Activated CD8-positive, alpha-beta memory T cell treated with anti-CD3 and anti-CD28 coated beads, Interleukin-2, amount 10 ng/mL, durations not matched to agents 7 days and 5 days (primary cell): ENCODE measurements at regions of chr1 and their contacts with region 1.

Region 1: GRCh38 chr1:2194898-2195673 is 514 bp upstream of the FAAP20 start:
- DNase-seq: peak; percentile 93
- ATAC-seq: peak; percentile 80
- H3K4me3 Mint-ChIP-seq: peak overlapping the region; percentile 73
- H3K27ac Mint-ChIP-seq: peak overlapping the region; percentile 89
- H3K4me1 Mint-ChIP-seq: peaks cover 35% of the 10 kb centered on the region
- H3K27me3 Mint-ChIP-seq: no peaks in the 10 kb centered on the region

Region 2: DNA sequence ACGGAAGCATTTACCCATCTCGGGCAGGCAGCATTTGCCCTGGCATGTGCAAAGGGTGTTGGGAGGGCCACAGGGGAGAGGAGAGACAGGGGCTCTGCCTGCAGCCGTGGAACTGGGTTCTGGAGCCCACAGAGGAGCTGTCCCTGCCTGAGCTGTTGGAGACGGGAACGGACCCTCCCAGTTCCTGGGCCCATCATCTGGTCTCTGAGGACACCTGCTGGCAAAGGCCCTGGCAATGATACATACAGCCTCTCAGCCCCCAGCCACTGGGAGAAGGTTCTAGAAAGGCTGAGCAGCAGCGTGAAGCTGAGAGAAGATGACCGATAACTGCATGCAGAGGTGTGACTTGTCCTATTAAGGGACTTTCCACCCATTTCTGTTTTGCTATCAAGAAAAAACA is 31.9 kb before region 1 on chr1:
- CTCF ChIA-PET with region 1: no interaction called
- DNase-seq: no peak
- ATAC-seq: no peak
- H3K4me3 Mint-ChIP-seq: no peak overlapping the region
- H3K27ac Mint-ChIP-seq: no peak overlapping the region
- H3K4me1 Mint-ChIP-seq: peaks cover 5% of the 10 kb centered on the region
- H3K27me3 Mint-ChIP-seq: no peaks in the 10 kb centered on the region

Region 3: GRCh38 chr1:2229037-2229864 is 34.2 kb after region 1 on chr1:
- CTCF ChIA-PET with region 1: interaction called, 14 read pairs
- DNase-seq: peak; percentile 76
- ATAC-seq: peak; percentile 13
- H3K4me3 Mint-ChIP-seq: peak overlapping the region; percentile 90
- H3K27ac Mint-ChIP-seq: peak overlapping the region; percentile 89
- H3K4me1 Mint-ChIP-seq: peaks cover 38% of the 10 kb centered on the region
- H3K27me3 Mint-ChIP-seq: peaks cover 8% of the 10 kb centered on the region

Region 4: DNA sequence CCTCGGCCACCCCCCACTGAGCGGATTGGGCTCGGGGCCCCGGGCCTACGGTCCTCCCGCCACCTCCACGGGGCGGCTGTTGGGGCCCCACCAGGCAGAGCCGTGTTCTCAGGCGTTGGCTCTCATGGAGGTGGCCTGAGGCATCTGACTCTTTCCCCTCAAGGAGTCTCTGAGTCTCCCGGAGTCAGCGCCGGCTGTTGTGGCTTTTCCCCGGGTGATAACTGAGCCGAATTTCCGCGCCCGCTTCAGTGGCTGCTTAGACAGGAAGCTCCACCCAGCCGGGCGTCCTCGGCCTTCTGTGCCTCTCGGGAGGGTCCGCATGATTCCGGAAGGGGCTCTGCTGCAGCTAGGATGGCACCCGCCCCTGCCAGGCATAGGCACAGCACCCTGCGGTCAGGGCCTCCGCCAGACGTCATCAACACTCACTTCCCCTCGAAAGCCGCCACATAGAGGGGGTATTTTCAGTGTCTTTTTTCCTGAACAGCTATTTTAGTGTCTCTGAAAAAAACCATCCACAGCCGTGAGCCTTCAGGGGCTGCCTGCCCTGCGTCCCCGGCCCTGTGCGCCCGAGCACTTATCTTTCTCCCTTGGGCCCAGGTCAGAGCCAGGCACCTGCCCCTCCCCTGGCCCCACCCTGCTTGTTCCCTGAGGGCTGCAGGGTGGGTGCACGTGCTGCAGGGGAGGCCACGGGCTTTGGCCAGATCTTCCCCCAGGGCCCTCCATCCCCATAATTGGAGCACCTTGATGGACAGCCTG is 105.9 kb after region 1 on chr1:
- CTCF ChIA-PET with region 1: interaction called, 11 read pairs
- DNase-seq: peak; percentile 94
- ATAC-seq: peak; percentile 77
- H3K4me3 Mint-ChIP-seq: peak overlapping the region; percentile 74
- H3K27ac Mint-ChIP-seq: peak overlapping the region; percentile 97
- H3K4me1 Mint-ChIP-seq: peaks cover 41% of the 10 kb centered on the region
- H3K27me3 Mint-ChIP-seq: no peaks in the 10 kb centered on the region

Region 5: DNA sequence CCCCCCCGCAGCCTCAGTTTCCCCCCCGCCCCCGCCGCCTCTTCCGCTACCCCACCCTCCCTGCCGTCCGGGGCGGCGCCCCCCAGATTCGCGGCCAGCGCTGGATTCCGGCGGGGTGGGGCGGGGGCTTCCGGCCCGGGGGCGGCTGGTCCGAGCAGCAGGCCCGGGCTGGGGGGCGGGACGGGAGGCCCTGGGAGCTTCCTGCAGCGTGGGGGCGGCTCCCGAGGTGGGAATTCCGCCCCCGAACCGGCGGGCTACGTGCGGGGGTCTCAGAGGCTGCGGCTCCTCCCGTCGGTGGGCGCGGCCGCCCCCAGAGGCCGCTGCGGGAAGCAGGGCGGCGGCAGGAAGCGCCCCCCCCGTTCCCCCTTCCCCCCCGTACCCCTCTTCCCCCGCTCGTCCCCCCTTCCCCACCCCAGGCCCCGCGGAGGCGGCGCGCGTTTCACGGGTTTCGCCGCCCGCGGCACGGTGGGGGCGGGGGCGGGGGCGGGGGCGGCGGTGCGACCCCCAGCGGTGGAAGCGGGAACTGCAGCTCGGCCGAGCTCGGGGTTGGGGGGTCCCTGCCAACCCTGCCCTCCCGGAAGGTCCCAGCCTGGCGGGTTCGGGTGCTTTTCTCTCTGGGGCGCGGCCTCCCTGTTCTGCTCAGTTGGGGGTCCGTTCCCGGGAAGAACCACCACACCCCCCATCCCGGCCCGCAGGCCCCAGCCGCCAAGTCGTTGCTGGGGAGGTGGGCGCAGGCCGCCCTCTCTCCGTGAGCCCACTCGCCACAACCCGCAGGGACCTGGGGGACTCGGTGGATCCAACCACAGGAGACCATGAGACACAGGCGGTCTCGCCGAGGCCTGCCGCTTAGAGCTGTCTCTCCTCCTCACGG is 120.0 kb after region 1 on chr1:
- CTCF ChIA-PET with region 1: interaction called, 41 read pairs
- DNase-seq: peak; percentile 63
- ATAC-seq: peak; percentile 53
- H3K4me3 Mint-ChIP-seq: peak overlapping the region; percentile 20
- H3K27ac Mint-ChIP-seq: no peak overlapping the region
- H3K4me1 Mint-ChIP-seq: peaks cover 6% of the 10 kb centered on the region
- H3K27me3 Mint-ChIP-seq: no peaks in the 10 kb centered on the region

Region 6: GRCh38 chr1:2381741-2382620 is 186.9 kb after region 1 on chr1:
- CTCF ChIA-PET with region 1: interaction called, 217 read pairs
- DNase-seq: peak; percentile 85
- ATAC-seq: peak; percentile 98
- H3K4me3 Mint-ChIP-seq: no peak overlapping the region
- H3K27ac Mint-ChIP-seq: no peak overlapping the region
- H3K4me1 Mint-ChIP-seq: peaks cover 2% of the 10 kb centered on the region
- H3K27me3 Mint-ChIP-seq: no peaks in the 10 kb centered on the region

Region 7: GRCh38 chr1:2391041-2391930 is 196.2 kb after region 1 on chr1 and contains the starts of genes MORN1 and RER1:
- CTCF ChIA-PET with region 1: interaction called, 41 read pairs
- DNase-seq: peak; percentile 99
- ATAC-seq: peak; percentile 98
- H3K4me3 Mint-ChIP-seq: peak within 1 kb of the TSS; percentile 89
- H3K27ac Mint-ChIP-seq: peak within 1 kb of the TSS; percentile 90
- H3K4me1 Mint-ChIP-seq: peaks cover 43% of the 10 kb centered on the region
- H3K27me3 Mint-ChIP-seq: no peaks in the 10 kb centered on the region
- total RNA-seq, gene MORN1: 8.0 to 8.5 TPM
- total RNA-seq, gene RER1: 146 to 174 TPM

Region 8: DNA sequence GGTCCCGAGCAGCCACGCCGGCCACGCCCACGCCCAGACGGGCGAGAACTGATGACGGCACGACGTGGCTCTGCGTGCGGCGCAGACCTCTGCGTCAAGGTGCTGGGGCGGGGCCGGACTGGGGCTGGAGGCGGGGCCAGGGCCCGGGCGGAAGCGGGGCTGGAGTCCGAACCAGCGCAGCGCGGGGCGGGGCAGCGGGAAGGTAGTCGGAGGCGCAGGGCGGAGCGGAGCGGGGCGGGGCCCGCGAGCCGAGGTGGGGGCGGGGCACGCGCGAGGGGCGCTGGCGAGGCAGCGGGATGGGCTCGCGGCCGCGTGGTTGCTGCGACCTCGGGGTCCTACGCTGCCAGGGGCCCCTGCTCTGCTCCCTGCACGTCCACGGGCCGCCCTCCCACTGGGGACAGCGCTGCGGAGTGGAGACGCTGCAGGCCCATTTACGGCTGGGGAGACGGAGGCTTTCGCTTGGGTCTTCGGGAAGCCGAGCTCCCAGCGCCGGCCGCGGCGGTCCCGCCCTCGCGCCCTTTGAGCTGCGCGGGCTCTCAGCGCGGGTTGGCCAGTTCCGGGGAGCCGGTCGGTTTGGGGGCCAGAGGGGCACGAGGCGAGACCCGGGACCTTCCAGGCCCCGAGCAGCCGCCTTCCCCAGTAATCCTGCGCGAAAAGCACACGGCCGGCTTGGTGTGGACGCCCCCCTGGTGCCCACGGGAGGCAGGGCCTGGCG is 217.6 kb after region 1 on chr1 and contains the start of gene PEX10:
- CTCF ChIA-PET with region 1: interaction called, 12 read pairs
- DNase-seq: peak; percentile 99
- ATAC-seq: peak; percentile 88
- H3K4me3 Mint-ChIP-seq: peak within 1 kb of the TSS; percentile 81
- H3K27ac Mint-ChIP-seq: peak within 1 kb of the TSS; percentile 95
- H3K4me1 Mint-ChIP-seq: peaks cover 43% of the 10 kb centered on the region
- H3K27me3 Mint-ChIP-seq: no peaks in the 10 kb centered on the region
- total RNA-seq, gene PEX10: 8.7 to 12.3 TPM